Mammary epithelial cell (primary cell): ENCODE measurements at regions of chr4 and their contacts with region 1.

Region 1: GRCh38 chr4:138870737-138871554 is 144.6 kb upstream of the NOCT start:
- DNase-seq: peak; percentile 52
- H3K4me3 ChIP-seq: no peak overlapping the region
- H3K27ac ChIP-seq: no peak overlapping the region
- H3K4me1 ChIP-seq: peaks cover 6% of the 10 kb centered on the region
- H3K27me3 ChIP-seq: no peaks in the 10 kb centered on the region
- CTCF ChIP-seq: peak; percentile 79 to 80

Region 2: GRCh38 chr4:137735561-137736104 is 1135.3 kb before region 1 on chr4:
- CTCF ChIA-PET with region 1: no interaction called
- dilution Hi-C with region 1: no loop called
- in situ Hi-C with region 1: no loop called
- intact Hi-C with region 1: loop called (anchors 10 kb)
- DNase-seq: no peak
- H3K4me3 ChIP-seq: no peak overlapping the region
- H3K27ac ChIP-seq: no peak overlapping the region
- H3K4me1 ChIP-seq: no peaks in the 10 kb centered on the region
- H3K27me3 ChIP-seq: no peaks in the 10 kb centered on the region
- CTCF ChIP-seq: no peak

Region 3: DNA sequence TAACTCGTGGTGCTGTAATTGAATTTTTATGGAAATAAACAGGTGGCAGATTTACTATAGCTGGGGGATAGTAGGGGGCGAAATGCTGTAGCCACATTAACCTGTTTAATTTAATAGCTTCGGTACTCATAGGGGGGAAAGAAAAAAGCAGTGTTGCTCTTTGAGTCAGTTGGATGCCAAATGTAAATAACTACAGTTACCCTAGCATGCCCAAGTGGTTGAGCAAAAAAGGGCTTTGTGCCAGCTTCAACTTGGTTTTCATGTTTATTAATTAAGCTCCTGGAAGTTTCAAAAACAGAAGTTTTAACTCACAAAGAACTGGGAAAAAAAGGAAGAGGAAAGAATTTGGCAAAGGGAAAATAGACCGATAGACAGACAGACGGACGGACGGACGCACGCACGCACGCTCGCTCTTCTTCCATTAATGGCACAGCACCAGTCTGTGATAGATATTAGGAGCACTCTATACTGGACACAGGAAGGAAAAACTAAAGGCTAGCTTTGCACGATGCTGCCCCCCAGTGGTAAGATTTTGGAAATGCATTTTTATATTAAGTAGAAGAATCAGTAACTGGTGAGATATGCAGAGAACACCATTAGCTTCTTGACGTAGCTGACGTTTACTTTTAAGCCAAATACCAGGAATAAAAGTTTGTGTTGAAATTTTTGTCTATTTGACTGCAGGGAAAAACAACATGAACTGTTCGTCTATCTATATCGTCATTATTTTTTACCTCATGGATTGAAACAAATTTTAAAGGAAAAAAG is 780.6 kb before region 1 on chr4:
- CTCF ChIA-PET with region 1: no interaction called
- dilution Hi-C with region 1: no loop called
- in situ Hi-C with region 1: no loop called
- intact Hi-C with region 1: loop called (anchors 5 kb)
- DNase-seq: peak; percentile 75
- H3K4me3 ChIP-seq: peak overlapping the region; percentile 13 to 26 (median 13)
- H3K27ac ChIP-seq: no peak overlapping the region
- H3K4me1 ChIP-seq: peaks cover 5% of the 10 kb centered on the region
- H3K27me3 ChIP-seq: no peaks in the 10 kb centered on the region
- CTCF ChIP-seq: peak; percentile 67 to 71

Region 4: DNA sequence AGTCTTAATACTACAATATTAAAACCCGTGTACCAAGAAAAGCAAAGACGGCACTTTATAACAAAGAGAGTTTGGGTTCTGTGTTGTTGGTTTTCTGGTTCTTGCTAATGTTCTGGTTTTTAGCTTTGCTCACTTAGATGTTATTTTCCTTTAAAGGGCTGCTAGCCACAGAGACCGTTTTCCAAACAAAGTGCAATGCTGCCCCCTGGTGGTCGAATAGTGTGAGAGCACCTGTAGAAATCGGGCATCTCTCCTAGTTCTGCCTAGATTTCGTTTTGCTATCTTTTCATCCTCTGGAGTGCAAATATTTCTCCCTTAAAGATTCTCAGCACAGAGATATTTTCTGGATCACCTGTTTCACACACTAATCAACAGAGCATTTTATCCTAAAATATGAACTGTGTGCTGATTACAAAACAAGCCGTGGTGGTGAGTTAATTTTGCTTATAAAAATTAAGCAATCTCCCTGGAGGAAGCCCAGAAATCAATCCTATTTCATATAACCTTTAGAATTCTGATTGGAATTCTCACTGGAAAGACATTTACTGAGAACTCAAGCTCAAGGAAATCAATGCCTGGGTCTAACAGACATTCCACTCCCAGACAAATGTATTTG is 189.8 kb before region 1 on chr4:
- CTCF ChIA-PET with region 1: interaction called, 5 read pairs
- dilution Hi-C with region 1: no loop called
- in situ Hi-C with region 1: no loop called
- intact Hi-C with region 1: loop called (anchors 1 kb)
- DNase-seq: peak; percentile 49
- H3K4me3 ChIP-seq: no peak overlapping the region
- H3K27ac ChIP-seq: no peak overlapping the region
- H3K4me1 ChIP-seq: no peaks in the 10 kb centered on the region
- H3K27me3 ChIP-seq: no peaks in the 10 kb centered on the region
- CTCF ChIP-seq: peak; percentile 81 to 83

Region 5: GRCh38 chr4:138835832-138836533 is 35.0 kb before region 1 on chr4:
- CTCF ChIA-PET with region 1: interaction called, 4 read pairs
- dilution Hi-C with region 1: no loop called
- in situ Hi-C with region 1: no loop called
- intact Hi-C with region 1: loop called (anchors 1 kb)
- DNase-seq: peak; percentile 29
- H3K4me3 ChIP-seq: no peak overlapping the region
- H3K27ac ChIP-seq: no peak overlapping the region
- H3K4me1 ChIP-seq: no peaks in the 10 kb centered on the region
- H3K27me3 ChIP-seq: peaks cover 4% of the 10 kb centered on the region
- CTCF ChIP-seq: peak in 1 of 2 donors; percentile 19

Region 6: DNA sequence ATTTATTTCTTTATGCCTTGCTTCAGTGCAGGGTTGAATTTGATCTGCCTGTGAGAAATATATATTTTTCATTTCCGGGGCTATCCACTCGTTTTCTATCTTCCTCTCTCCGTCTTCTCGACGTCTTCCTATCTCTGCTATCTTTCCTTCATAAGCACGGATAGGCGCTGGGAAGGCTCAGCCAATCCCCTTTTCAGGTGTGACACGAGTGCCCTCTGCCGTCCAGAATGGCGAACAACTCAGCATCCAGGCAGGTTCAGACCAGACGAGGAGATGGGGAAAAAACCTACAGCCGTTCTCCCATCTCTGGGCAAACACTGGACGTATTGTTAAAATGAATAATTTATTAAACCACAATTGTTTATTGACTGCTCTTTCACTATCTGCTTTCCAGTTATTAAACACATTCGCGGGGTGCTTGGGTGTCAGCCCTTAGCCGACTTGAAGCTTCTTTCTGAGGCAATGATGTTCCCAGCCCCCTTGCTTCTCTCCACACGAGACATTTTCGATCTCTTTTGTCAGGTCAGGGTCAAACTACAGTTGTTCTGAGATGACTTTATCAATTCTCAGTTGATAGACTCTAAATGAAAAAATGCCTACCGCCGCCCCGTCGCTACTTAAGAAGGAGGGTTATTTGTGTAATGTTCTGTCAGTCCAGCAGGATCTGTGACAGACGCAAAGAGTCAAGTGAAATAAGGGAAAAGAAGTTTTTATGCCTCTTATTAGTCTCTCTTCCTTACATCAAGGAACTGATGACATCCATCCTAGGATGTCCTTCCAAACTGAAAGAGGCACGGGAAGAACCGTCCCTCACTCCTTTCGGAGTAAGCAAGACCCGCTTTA is 48.4 kb after region 1 on chr4:
- CTCF ChIA-PET with region 1: no interaction called
- dilution Hi-C with region 1: no loop called
- in situ Hi-C with region 1: no loop called
- intact Hi-C with region 1: loop called (anchors 1 kb)
- DNase-seq: peak; percentile 74
- H3K4me3 ChIP-seq: no peak overlapping the region
- H3K27ac ChIP-seq: no peak overlapping the region
- H3K4me1 ChIP-seq: no peaks in the 10 kb centered on the region
- H3K27me3 ChIP-seq: no peaks in the 10 kb centered on the region
- CTCF ChIP-seq: peak; percentile 87 to 92

Region 7: DNA sequence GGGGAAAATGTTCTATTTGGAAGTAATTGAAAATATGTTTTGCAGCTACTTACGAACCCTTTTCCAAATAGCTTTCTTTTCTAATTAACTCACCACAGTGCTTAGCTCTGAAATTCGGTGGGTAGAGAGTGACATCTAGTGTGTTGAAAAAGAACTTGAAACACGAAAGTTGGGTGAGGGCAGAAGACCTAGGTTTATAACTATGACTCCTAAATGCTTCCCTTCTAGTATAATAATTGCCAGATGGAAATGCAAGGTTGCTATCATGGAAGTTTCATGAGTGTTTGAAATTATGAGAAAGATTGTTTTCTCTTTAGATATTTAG is 67.4 kb after region 1 on chr4:
- CTCF ChIA-PET with region 1: interaction called, 7 read pairs
- dilution Hi-C with region 1: no loop called
- in situ Hi-C with region 1: no loop called
- intact Hi-C with region 1: loop called (anchors 1 kb)
- DNase-seq: peak; percentile 48
- H3K4me3 ChIP-seq: no peak overlapping the region
- H3K27ac ChIP-seq: no peak overlapping the region
- H3K4me1 ChIP-seq: peaks cover 8% of the 10 kb centered on the region
- H3K27me3 ChIP-seq: no peaks in the 10 kb centered on the region
- CTCF ChIP-seq: peak; percentile 35 to 60